H1 (cell line): ENCODE measurements at regions of chr6 and their contacts with region 1.

Region 1: GRCh38 chr6:114747987-114748630 is 405.3 kb upstream of the HS3ST5 start:
- DNase-seq: no peak
- H3K4me3 ChIP-seq: no peak overlapping the region
- H3K27ac ChIP-seq: no peak overlapping the region
- H3K4me1 ChIP-seq: no peaks in the 10 kb centered on the region
- H3K27me3 ChIP-seq: no peaks in the 10 kb centered on the region
- CTCF ChIP-seq: peak in 2 of 3 experiments; percentile 26 to 36; a peak in 2 of 4 replicates
- EP300 ChIP-seq: no peak
- POLR2A ChIP-seq: no peak
- RAD21 ChIP-seq: peak; percentile 63 to 66

Region 2: GRCh38 chr6:114735025-114735735 is 12.9 kb before region 1 on chr6:
- CTCF ChIA-PET with region 1: interaction called, 10 read pairs
- POLR2A ChIA-PET with region 1: no interaction called
- DNase-seq: no peak
- H3K4me3 ChIP-seq: no peak overlapping the region
- H3K27ac ChIP-seq: no peak overlapping the region
- H3K4me1 ChIP-seq: no peaks in the 10 kb centered on the region
- H3K27me3 ChIP-seq: no peaks in the 10 kb centered on the region
- CTCF ChIP-seq: peak in 1 of 3 experiments; percentile 12; a peak in 1 of 4 replicates
- EP300 ChIP-seq: no peak
- POLR2A ChIP-seq: no peak
- RAD21 ChIP-seq: 0 out of 4 replicates have a peak, but pooled peaks of 1 of the 2 experiments have one; percentile 12